ENCODE measurements at regions of chr1 and their contacts with region 1.

Region 1: DNA sequence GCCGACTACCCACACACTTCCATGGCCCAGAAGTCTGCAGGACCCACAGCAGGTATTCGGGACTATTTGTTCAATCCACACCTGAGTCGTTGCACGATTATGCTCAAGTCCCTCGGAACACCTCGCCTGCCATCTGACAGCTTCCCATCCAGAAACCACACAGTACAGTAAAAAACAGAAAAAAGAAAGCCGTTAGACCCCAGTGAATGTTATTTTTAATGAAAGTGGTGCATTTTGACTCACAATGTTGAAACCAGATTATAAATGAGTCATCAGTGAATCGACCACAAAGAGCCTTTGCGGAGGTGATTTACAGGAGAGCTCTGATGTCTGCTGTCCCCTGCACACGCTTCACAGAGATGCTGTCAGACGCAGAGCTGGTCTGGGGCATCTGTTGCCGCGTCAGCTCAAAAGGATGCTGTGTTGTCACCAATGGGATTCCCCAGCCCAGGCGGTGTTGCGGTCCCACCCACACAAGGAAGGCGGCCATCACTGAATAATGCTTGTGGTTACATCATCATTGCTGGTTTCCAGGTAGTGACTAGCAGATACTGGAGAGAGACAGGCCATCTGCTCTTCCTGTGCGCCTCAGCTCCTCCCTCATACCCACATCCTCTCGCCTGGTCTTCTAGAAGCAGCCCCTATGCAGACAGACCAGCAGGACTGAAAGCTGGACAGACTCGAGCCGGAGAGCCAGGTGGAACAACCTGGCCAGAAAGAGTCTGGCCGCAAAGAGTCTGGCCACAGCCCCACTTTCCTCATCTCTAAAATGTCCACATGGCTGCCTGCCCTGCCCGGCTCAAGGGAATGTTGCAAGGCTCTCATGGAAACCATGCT is 116.8 kb downstream of the TOMM20 start:
- DNase-seq: peak; percentile 81 to 100 (median 90)
- ATAC-seq: peak; percentile 91
- H3K4me3 ChIP-seq: peak overlapping the region; percentile 38
- H3K4me3 Mint-ChIP-seq: peak overlapping the region; percentile 58
- H3K27ac ChIP-seq: peak overlapping the region; percentile 88 to 89
- H3K27ac Mint-ChIP-seq: peak overlapping the region; percentile 86
- H3K4me1 ChIP-seq: peaks cover 52% of the 10 kb centered on the region
- H3K4me1 Mint-ChIP-seq: peaks cover 69% of the 10 kb centered on the region
- H3K27me3 ChIP-seq: no peaks in the 10 kb centered on the region
- H3K27me3 Mint-ChIP-seq: no peaks in the 10 kb centered on the region
- CTCF ChIP-seq: no peak

Region 2: DNA sequence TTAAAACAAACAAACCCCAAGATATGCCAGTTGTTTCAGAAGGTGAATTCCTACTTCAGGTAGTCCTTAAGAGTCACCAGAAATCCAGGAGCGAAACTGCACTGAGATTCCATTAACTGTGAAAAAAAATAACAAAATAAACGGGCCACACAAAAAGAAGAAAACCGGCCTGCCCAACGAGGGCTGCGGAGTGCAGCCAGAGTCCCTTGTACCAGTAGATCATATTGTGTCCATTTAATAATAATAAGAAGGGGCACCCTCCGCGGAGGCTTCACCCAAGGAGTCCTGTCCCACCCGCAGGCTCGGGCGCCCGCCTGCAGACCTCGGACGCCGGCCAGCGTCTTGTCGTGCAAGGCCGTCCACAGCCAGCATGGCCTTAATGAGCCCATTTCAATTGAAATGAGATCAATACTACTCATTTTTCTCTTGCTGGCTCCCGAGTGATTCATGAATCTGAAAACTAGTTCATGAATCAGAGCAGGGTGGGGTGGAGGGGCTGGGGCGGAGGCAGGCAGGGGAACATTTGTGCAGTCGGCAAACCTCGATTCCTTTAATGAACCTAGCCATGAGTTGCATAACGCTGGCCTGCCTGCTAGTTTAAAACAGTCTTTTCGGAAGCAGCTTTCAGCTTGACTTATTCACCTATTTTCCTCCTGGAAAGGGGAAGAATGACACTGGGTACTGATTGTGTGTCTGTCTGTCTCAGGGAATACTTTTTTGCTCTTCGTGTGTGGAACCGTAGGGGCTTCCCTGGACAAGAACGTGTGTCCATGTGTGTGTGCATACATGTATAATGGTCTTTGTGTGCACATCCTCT is 288.7 kb before region 1 on chr1:
- CTCF ChIA-PET with region 1: interaction called, 4 read pairs
- POLR2A ChIA-PET with region 1: interaction called, 9 read pairs
- intact Hi-C with region 1: loop called in 1 of 2 experiments (anchors 1 kb)
- DNase-seq: peak in 13 of 14 experiments; percentile 23 to 81 (median 51)
- ATAC-seq: peak; percentile 9
- H3K4me3 ChIP-seq: peak overlapping the region; percentile 33
- H3K4me3 Mint-ChIP-seq: peak overlapping the region; percentile 76
- H3K27ac ChIP-seq: peak overlapping the region; percentile 94 to 98
- H3K27ac Mint-ChIP-seq: peak overlapping the region; percentile 93
- H3K4me1 ChIP-seq: peaks cover 56% of the 10 kb centered on the region
- H3K4me1 Mint-ChIP-seq: peaks cover 93% of the 10 kb centered on the region
- H3K27me3 ChIP-seq: no peaks in the 10 kb centered on the region
- H3K27me3 Mint-ChIP-seq: no peaks in the 10 kb centered on the region
- CTCF ChIP-seq: no peak

Region 3: GRCh38 chr1:234772345-234773147 is 239.3 kb before region 1 on chr1:
- CTCF ChIA-PET with region 1: no interaction called
- POLR2A ChIA-PET with region 1: interaction called, 11 read pairs
- intact Hi-C with region 1: loop called in 1 of 2 experiments (anchors 10 kb)
- DNase-seq: peak; percentile 56 to 95 (median 78)
- ATAC-seq: peak; percentile 82
- H3K4me3 ChIP-seq: peak overlapping the region; percentile 21
- H3K4me3 Mint-ChIP-seq: peak overlapping the region; percentile 42
- H3K27ac ChIP-seq: peak overlapping the region; percentile 59 to 72
- H3K27ac Mint-ChIP-seq: peak overlapping the region; percentile 87
- H3K4me1 ChIP-seq: peaks cover 53% of the 10 kb centered on the region
- H3K4me1 Mint-ChIP-seq: peaks cover 56% of the 10 kb centered on the region
- H3K27me3 ChIP-seq: peaks cover 4 to 12% of the 10 kb centered on the region in 2 experiments
- H3K27me3 Mint-ChIP-seq: no peaks in the 10 kb centered on the region
- CTCF ChIP-seq: no peak

Region 4: GRCh38 chr1:234842726-234843641 is 168.8 kb before region 1 on chr1:
- CTCF ChIA-PET with region 1: no interaction called
- POLR2A ChIA-PET with region 1: interaction called, 3 read pairs
- intact Hi-C with region 1: loop called in 1 of 2 experiments (anchors 1 kb)
- DNase-seq: peak; percentile 20 to 82 (median 42)
- ATAC-seq: peak; percentile 31
- H3K4me3 ChIP-seq: peak overlapping the region; percentile 10
- H3K4me3 Mint-ChIP-seq: peak overlapping the region; percentile 9
- H3K27ac ChIP-seq: no peak overlapping the region
- H3K27ac Mint-ChIP-seq: peak overlapping the region; percentile 81
- H3K4me1 ChIP-seq: peaks cover 41% of the 10 kb centered on the region
- H3K4me1 Mint-ChIP-seq: peaks cover 78% of the 10 kb centered on the region
- H3K27me3 ChIP-seq: no peaks in the 10 kb centered on the region
- H3K27me3 Mint-ChIP-seq: no peaks in the 10 kb centered on the region
- CTCF ChIP-seq: no peak

Region 5: DNA sequence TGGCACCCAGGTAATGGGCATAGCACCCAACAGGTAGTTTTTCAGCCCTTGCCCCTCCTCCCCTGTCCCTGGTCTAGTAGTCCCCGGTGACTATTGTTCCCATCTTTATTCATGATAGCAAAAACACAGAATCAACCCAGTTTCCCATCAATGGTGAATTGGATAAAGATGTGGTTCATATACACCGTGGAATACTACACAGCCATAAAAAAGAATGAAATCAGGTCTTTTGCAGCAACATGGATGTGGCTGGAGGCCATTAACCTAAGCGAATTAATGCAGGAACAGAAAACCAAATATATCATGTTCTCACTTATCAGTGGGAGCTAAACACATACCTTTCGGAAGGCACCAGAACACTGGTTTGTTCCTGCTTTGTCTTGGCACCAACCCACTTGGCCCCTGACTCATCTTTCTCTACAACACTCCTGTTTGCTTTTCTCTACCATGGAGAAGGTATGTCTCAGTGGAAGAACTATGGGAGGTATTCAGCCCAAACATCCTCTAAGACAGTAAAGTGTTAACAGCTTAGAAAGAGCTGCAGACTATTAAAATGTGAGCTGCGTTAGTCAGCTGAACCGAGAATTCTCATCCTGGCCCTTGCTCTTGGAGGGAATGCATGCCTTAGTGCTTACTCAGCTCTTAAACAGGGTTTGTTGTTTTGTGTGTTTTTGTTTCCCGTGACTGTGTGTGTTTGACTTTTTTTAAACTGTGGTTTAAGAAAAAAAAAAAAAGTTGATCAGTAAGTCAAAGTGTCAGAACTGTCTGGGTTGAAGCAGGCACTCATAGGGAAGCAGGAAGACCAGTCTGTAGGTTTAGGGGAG is 86.2 kb before region 1 on chr1:
- CTCF ChIA-PET with region 1: no interaction called
- POLR2A ChIA-PET with region 1: interaction called, 5 read pairs
- intact Hi-C with region 1: loop called (anchors 5 kb)
- DNase-seq: peak in 4 of 14 experiments; percentile 48 to 67 (median 62)
- ATAC-seq: peak; percentile 58
- H3K4me3 ChIP-seq: peak overlapping the region; percentile 43
- H3K4me3 Mint-ChIP-seq: peak overlapping the region; percentile 42
- H3K27ac ChIP-seq: no peak overlapping the region
- H3K27ac Mint-ChIP-seq: peak overlapping the region; percentile 76
- H3K4me1 ChIP-seq: peaks cover 60% of the 10 kb centered on the region
- H3K4me1 Mint-ChIP-seq: peaks cover 55% of the 10 kb centered on the region
- H3K27me3 ChIP-seq: no peaks in the 10 kb centered on the region
- H3K27me3 Mint-ChIP-seq: no peaks in the 10 kb centered on the region
- CTCF ChIP-seq: no peak

Region 6: GRCh38 chr1:234963180-234963903 is 48.5 kb before region 1 on chr1:
- CTCF ChIA-PET with region 1: no interaction called
- POLR2A ChIA-PET with region 1: interaction called, 9 read pairs
- intact Hi-C with region 1: loop called (anchors 2 to 5 kb)
- DNase-seq: peak; percentile 59 to 97 (median 78)
- ATAC-seq: peak; percentile 79
- H3K4me3 ChIP-seq: peak overlapping the region; percentile 25
- H3K4me3 Mint-ChIP-seq: peak overlapping the region; percentile 78
- H3K27ac ChIP-seq: peak overlapping the region; percentile 71 to 81
- H3K27ac Mint-ChIP-seq: peak overlapping the region; percentile 90
- H3K4me1 ChIP-seq: peaks cover 63% of the 10 kb centered on the region
- H3K4me1 Mint-ChIP-seq: peaks cover 66% of the 10 kb centered on the region
- H3K27me3 ChIP-seq: no peaks in the 10 kb centered on the region
- H3K27me3 Mint-ChIP-seq: no peaks in the 10 kb centered on the region
- CTCF ChIP-seq: no peak

Region 7: GRCh38 chr1:234978397-234979295 is 33.2 kb before region 1 on chr1:
- CTCF ChIA-PET with region 1: interaction called, 8 read pairs
- POLR2A ChIA-PET with region 1: interaction called, 9 read pairs
- intact Hi-C with region 1: loop called in 1 of 2 experiments (anchors 5 kb)
- DNase-seq: peak in 13 of 14 experiments; percentile 30 to 89 (median 55)
- ATAC-seq: peak; percentile 79
- H3K4me3 ChIP-seq: no peak overlapping the region
- H3K4me3 Mint-ChIP-seq: peak overlapping the region; percentile 82
- H3K27ac ChIP-seq: peak overlapping the region; percentile 63 to 72
- H3K27ac Mint-ChIP-seq: peak overlapping the region; percentile 93
- H3K4me1 ChIP-seq: peaks cover 53% of the 10 kb centered on the region
- H3K4me1 Mint-ChIP-seq: peaks cover 65% of the 10 kb centered on the region
- H3K27me3 ChIP-seq: no peaks in the 10 kb centered on the region
- H3K27me3 Mint-ChIP-seq: no peaks in the 10 kb centered on the region
- CTCF ChIP-seq: peak; percentile 18